ENCODE measurements at regions of chr6 and their contacts with region 1.

Region 1: GRCh38 chr6:6676910-6677441 is 88.5 kb downstream of the LY86 start:
- DNase-seq: peak; percentile 43 to 68
- ATAC-seq: peak; percentile 82 to 86; a peak in 5 of 6 replicates
- H3K4me3 ChIP-seq: no peak overlapping the region
- H3K27ac ChIP-seq: peak overlapping the region in 1 of 2 experiments; percentile 46; a peak in 1 of 6 replicates
- H3K4me1 ChIP-seq: peaks cover 14% of the 10 kb centered on the region
- CTCF ChIP-seq: peak; percentile 69
- EP300 ChIP-seq: no peak
- POLR2A ChIP-seq: no peak
- RAD21 ChIP-seq: peak; percentile 82 to 87

Region 2: DNA sequence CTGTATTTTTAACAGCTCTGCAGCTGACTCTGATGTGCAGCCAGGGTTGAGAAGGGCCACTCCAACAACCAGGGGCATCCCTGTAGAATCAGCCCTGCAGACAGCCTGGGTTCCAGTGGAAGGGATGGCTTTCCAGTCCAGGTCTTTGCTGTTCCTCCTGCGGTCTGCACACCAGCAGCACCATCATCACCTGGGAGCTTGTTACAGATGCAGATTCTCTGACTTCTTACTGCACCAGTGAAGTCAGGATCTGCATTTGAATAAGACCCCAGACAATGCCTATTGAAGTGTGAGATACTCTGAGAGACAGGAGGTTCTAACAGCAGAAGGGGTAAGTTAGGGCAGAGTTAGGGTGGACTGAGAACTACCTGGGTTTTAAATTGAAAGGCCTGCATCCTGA is 507.8 kb before region 1 on chr6:
- CTCF ChIA-PET with region 1: no interaction called
- POLR2A ChIA-PET with region 1: no interaction called
- DNase-seq: no peak
- ATAC-seq: no peak
- H3K4me3 ChIP-seq: no peak overlapping the region
- H3K27ac ChIP-seq: no peak overlapping the region
- H3K4me1 ChIP-seq: no peaks in the 10 kb centered on the region
- CTCF ChIP-seq: no peak
- EP300 ChIP-seq: no peak
- POLR2A ChIP-seq: no peak
- RAD21 ChIP-seq: no peak

Region 3: DNA sequence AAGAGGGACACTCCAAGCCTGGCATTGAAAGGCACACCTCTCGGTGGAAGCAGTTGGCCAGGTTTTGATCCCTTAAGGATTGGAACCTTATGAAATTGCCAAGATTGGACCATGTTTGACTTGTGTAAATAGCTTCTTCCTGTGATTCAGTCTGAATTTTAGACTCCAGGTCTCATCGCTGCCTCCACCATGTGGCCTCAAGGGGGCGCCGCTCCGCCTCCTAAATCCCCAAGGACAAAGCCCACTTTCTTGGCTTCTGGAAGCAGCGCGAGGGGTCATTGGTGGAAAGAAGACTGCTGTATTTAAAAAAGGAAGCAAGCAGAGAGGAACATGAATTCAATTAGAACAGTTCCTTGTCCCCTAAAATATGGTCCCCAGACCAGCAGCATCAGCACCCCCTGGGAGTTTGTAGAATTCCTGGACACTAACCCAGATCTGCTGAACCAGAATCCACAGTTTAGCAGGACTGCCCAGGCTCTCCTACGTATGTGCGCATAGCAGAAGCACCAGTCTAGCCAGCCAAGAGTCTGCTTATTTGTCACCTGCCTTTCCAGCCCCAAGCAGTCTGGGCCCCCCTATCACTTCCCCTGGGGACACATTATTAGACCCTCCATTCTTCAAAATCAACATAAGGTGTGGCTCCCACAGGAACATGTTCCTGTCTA is 20.0 kb after region 1 on chr6:
- CTCF ChIA-PET with region 1: interaction called, 10 read pairs
- POLR2A ChIA-PET with region 1: no interaction called
- DNase-seq: peak; percentile 33 to 73
- ATAC-seq: peak; percentile 25 to 75; a peak in 3 of 6 replicates
- H3K4me3 ChIP-seq: no peak overlapping the region
- H3K27ac ChIP-seq: no peak overlapping the region; a peak in 1 of 6 replicates
- H3K4me1 ChIP-seq: peaks cover 18% of the 10 kb centered on the region
- CTCF ChIP-seq: peak; percentile 52
- EP300 ChIP-seq: no peak
- POLR2A ChIP-seq: no peak
- RAD21 ChIP-seq: peak; percentile 42 to 60; a peak in 4 of 5 replicates

Region 4: DNA sequence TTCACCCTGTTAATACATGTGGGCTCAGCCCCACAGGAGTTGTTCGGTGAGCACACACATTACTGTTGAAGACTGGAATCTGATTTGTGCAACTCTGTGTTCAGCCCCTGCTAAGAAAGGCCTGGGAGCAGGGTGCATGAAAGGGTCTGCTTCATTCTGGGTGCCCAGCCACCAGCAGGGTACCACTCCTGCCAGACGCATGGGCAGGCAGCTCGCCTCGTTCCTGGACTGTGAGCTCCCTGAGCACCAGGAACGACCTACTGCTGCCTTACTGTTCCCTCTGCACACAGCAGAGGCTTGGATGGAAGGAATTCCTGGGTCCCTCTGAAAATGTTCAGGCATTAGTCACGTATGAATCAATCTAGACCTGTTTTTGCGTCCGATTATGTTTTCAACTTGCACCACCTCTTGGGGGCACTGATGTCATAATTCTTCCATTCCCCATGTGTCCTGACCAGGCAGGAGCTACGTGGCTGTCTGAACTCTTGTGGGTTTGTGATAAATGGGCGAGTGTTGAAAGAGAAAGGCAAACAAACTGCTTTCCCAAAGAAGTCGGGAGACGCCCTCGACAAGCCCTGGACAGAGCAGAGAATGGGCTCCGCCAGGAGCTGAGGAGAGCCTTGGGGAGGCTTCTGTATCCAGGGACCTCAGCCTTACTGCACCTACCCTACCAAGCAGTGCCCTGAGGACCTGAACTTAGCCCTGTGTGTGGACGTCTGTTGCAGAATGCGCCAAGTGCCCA is 35.5 kb after region 1 on chr6:
- CTCF ChIA-PET with region 1: interaction called, 11 read pairs
- POLR2A ChIA-PET with region 1: no interaction called
- DNase-seq: peak; percentile 60 to 83
- ATAC-seq: peak; percentile 89 to 92
- H3K4me3 ChIP-seq: no peak overlapping the region
- H3K27ac ChIP-seq: peak overlapping the region; percentile 68 to 80
- H3K4me1 ChIP-seq: peaks cover 21% of the 10 kb centered on the region
- CTCF ChIP-seq: peak; percentile 37; the same call in 2 of the 3 replicates
- EP300 ChIP-seq: no peak
- POLR2A ChIP-seq: no peak
- RAD21 ChIP-seq: peak; percentile 49 to 55

Region 5: DNA sequence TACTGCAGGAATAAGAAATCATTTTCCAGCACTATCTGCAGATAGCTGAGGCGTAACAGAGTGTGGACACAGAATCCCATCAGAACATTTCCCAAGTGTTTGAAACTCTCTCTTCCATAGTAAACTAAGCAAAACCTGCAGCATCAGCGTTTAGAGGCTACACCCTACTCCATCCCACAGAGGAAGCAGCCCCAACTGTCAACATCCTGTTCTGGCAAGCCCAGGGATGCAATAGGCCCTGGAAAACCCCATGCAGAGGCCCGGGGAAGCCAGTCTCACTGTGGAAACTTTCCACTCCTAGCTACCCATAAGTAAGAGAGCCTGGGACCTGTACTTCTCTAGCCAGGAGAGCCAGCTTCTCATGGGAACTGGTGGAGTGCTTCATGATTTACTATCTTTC is 41.0 kb after region 1 on chr6:
- CTCF ChIA-PET with region 1: interaction called, 19 read pairs
- POLR2A ChIA-PET with region 1: no interaction called
- DNase-seq: no peak
- ATAC-seq: no peak
- H3K4me3 ChIP-seq: no peak overlapping the region
- H3K27ac ChIP-seq: no peak overlapping the region
- H3K4me1 ChIP-seq: peaks cover 7% of the 10 kb centered on the region
- CTCF ChIP-seq: no peak
- EP300 ChIP-seq: no peak
- POLR2A ChIP-seq: no peak
- RAD21 ChIP-seq: no peak

Region 6: DNA sequence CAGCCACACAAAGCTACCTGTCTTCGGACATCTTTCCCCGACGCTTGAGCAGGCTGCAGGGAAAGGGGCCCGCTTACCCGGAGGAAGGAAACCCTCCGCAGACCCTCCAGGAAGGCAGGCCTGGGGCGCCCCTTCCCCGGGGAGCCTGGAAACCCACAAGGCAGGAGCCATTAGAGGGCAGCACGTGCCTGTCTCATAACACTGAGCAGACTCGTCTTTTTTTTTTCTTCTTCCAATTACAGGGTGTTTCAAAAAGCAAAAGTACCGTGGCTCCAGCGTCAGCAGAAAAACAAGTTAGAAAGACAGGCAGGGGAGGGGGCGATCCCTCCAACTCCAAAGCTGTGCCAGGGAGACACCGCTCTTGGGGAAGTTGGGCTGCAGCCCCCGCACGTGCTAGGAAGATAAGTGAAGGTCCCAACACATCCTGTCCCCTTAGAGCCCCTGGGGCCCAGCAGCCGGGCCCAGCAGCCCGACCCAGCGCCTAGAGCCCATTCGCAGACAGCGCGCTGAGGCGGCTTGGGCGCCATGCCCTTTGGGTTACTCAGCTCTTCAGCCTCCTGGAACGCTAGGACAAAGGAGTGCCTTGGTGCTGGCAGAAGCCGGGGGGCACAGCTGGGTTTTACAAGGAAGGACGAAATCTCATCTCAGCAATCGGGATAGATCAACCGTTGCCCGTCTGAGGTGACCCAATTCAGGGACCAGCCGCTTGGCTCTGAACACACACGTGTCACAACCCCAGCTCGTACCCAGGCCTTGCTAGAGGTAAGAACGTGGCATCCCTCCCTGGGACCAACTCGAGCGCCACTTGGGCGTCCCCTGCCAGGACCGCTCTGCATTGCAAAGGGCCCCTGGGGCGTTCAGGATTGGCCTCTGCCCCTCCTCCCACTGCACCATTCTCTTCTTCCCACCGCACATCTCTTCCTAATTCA is 47.8 kb after region 1 on chr6:
- CTCF ChIA-PET with region 1: interaction called, 19 read pairs
- POLR2A ChIA-PET with region 1: no interaction called
- DNase-seq: peak; percentile 44
- ATAC-seq: peak; percentile 78 to 94; a peak in 5 of 6 replicates
- H3K4me3 ChIP-seq: 0 out of 3 replicates have a peak overlapping the region, but pooled peaks have one; percentile 9
- H3K27ac ChIP-seq: peak overlapping the region; percentile 63 to 79; a peak in 5 of 6 replicates
- H3K4me1 ChIP-seq: peaks cover 8% of the 10 kb centered on the region
- CTCF ChIP-seq: peak; percentile 65
- EP300 ChIP-seq: no peak
- POLR2A ChIP-seq: no peak
- RAD21 ChIP-seq: peak; percentile 81 to 82

Region 7: DNA sequence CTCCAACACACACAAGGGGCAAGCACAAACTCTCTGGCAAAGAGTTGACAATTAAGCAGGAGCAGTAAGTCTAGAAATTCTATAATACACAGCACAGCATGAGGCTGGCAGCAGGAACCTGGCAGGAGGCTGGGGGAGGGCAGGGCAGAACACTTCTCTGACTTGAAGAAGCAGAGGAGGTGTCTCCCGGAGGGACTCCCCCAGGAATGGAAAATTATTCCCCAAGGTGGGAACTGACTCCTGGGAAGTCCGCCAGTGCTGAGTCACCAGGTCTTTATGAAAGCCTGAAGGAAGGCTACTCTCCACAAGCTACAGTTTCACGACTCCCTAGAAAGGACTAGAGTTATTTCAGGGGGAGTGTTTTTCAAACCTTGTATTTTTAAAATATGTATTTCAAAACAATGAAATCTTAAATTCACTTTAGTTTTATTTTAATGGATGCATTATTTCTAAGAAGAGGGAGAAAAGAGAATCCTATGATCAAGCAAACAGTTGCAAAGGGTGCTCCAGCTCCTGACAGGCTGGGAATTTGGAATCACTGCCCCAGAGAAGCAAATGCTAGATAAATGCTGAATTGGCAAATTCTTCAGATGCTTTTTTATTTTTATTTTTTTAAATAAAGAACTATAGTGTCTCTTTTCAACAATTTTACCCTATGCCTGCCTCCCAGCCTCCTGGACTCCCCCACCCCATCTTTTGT is 104.3 kb after region 1 on chr6:
- CTCF ChIA-PET with region 1: no interaction called
- POLR2A ChIA-PET with region 1: no interaction called
- DNase-seq: peak; percentile 15 to 53
- ATAC-seq: peak; percentile 81 to 86; a peak in 4 of 6 replicates
- H3K4me3 ChIP-seq: no peak overlapping the region
- H3K27ac ChIP-seq: peak overlapping the region; percentile 27 to 66; a peak in 3 of 6 replicates
- H3K4me1 ChIP-seq: peaks cover 11% of the 10 kb centered on the region; the same call in 2 of the 3 replicates
- CTCF ChIP-seq: no peak
- EP300 ChIP-seq: no peak
- POLR2A ChIP-seq: no peak
- RAD21 ChIP-seq: no peak

Region 8: GRCh38 chr6:7238900-7239589 is 562.1 kb after region 1 on chr6:
- CTCF ChIA-PET with region 1: interaction called, 18 read pairs
- POLR2A ChIA-PET with region 1: no interaction called
- DNase-seq: peak; percentile 56 to 75
- ATAC-seq: peak; percentile 73 to 88
- H3K4me3 ChIP-seq: no peak overlapping the region
- H3K27ac ChIP-seq: peak overlapping the region in 1 of 2 experiments; percentile 60; a peak in 2 of 6 replicates
- H3K4me1 ChIP-seq: peaks cover 35% of the 10 kb centered on the region
- CTCF ChIP-seq: peak; percentile 55
- EP300 ChIP-seq: no peak
- POLR2A ChIP-seq: no peak
- RAD21 ChIP-seq: peak; percentile 49 to 64

Measured in A549 (cell line).